ENCODE measurements at regions of chr1 and their contacts with region 1.

Region 1: GRCh38 chr1:3423245-3423829 is 31.1 kb upstream of the ARHGEF16 start:
- DNase-seq: no peak
- ATAC-seq: no peak
- H3K4me3 Mint-ChIP-seq: no peak overlapping the region
- H3K27ac Mint-ChIP-seq: no peak overlapping the region
- H3K4me1 Mint-ChIP-seq: no peaks in the 10 kb centered on the region
- H3K27me3 Mint-ChIP-seq: 0 out of 2 replicates have a peak, but pooled peaks cover 4% of the 10 kb centered on the region
- CTCF ChIP-seq: no peak

Region 2: GRCh38 chr1:3060601-3061551 is 362.5 kb before region 1 on chr1:
- CTCF ChIA-PET with region 1: interaction called, 22 read pairs
- POLR2A ChIA-PET with region 1: no interaction called
- DNase-seq: no peak
- ATAC-seq: no peak
- H3K4me3 Mint-ChIP-seq: no peak overlapping the region
- H3K27ac Mint-ChIP-seq: no peak overlapping the region
- H3K4me1 Mint-ChIP-seq: peaks cover 7% of the 10 kb centered on the region; the same call in 1 of the 2 replicates
- H3K27me3 Mint-ChIP-seq: peaks cover 84% of the 10 kb centered on the region
- CTCF ChIP-seq: no peak

Region 3: GRCh38 chr1:3265835-3266805 is 157.2 kb before region 1 on chr1:
- CTCF ChIA-PET with region 1: interaction called, 10 read pairs
- POLR2A ChIA-PET with region 1: no interaction called
- DNase-seq: no peak
- ATAC-seq: no peak
- H3K4me3 Mint-ChIP-seq: no peak overlapping the region
- H3K27ac Mint-ChIP-seq: no peak overlapping the region
- H3K4me1 Mint-ChIP-seq: no peaks in the 10 kb centered on the region; the same call in 1 of the 2 replicates
- H3K27me3 Mint-ChIP-seq: no peaks in the 10 kb centered on the region
- CTCF ChIP-seq: no peak

Region 4: DNA sequence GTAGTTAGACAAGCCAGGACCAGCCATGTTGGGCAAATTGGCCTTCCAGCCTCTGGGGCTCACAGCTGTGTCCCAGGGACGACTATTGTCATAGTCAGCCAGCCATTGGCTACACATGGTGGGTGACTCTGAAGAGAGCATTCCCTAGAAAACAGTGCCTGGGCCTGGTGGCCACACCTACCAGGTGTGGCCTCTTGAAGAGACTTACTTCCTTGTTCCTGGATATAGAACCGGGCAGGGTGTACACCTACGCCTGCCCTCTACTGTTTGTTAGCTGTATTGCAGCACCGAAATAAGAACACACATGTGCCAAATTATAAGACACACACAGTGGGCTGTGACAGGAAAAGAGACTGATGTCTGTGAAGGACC is 103.5 kb before region 1 on chr1:
- CTCF ChIA-PET with region 1: interaction called, 12 read pairs
- POLR2A ChIA-PET with region 1: interaction called, 3 read pairs
- DNase-seq: peak; percentile 56
- ATAC-seq: peak; percentile 97
- H3K4me3 Mint-ChIP-seq: no peak overlapping the region
- H3K27ac Mint-ChIP-seq: no peak overlapping the region
- H3K4me1 Mint-ChIP-seq: peaks cover 9% of the 10 kb centered on the region
- H3K27me3 Mint-ChIP-seq: peaks cover 9% of the 10 kb centered on the region
- CTCF ChIP-seq: peak; percentile 80

Region 5: DNA sequence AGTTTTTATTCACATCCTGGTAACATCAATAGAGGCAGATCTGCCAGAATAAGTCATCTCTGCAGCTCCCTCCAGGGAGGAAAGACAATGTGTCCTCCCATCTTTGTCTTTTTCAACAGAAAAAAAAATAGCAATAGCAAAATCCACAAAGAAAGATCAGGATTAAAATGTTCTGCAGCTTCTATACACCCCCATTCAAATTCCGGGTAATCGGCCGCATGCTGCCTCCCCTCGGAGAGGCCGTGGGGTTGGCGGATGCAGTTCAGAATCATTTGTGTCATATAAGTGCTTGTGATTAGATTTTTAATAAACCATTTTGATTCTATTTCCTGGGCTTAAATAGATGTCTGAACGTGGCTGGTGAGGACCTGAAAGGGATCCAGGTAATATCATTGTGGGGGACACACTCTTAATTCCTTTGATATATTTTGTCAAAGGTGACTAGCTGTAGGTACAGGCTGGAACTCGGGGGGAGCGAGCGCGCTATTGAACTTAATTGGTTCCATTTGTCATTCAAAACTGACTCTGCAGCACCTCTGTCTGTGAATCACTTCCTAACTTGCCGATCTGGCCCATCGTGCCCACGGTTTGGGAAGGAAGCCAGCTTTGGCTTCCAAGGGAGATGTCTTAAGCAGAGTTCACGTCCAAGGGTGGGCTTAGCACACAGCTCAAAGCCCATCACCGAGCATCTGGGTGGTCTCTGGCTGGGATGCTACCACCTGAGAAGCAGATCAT is 54.5 kb before region 1 on chr1:
- CTCF ChIA-PET with region 1: interaction called, 12 read pairs
- POLR2A ChIA-PET with region 1: no interaction called
- DNase-seq: no peak
- ATAC-seq: peak; percentile 50; the same call in 1 of the 2 replicates
- H3K4me3 Mint-ChIP-seq: 0 out of 2 replicates have a peak overlapping the region, but pooled peaks have one; percentile 20
- H3K27ac Mint-ChIP-seq: 0 out of 2 replicates have a peak overlapping the region, but pooled peaks have one; percentile 52
- H3K4me1 Mint-ChIP-seq: peaks cover 17% of the 10 kb centered on the region
- H3K27me3 Mint-ChIP-seq: no peaks in the 10 kb centered on the region
- CTCF ChIP-seq: no peak

Region 6: DNA sequence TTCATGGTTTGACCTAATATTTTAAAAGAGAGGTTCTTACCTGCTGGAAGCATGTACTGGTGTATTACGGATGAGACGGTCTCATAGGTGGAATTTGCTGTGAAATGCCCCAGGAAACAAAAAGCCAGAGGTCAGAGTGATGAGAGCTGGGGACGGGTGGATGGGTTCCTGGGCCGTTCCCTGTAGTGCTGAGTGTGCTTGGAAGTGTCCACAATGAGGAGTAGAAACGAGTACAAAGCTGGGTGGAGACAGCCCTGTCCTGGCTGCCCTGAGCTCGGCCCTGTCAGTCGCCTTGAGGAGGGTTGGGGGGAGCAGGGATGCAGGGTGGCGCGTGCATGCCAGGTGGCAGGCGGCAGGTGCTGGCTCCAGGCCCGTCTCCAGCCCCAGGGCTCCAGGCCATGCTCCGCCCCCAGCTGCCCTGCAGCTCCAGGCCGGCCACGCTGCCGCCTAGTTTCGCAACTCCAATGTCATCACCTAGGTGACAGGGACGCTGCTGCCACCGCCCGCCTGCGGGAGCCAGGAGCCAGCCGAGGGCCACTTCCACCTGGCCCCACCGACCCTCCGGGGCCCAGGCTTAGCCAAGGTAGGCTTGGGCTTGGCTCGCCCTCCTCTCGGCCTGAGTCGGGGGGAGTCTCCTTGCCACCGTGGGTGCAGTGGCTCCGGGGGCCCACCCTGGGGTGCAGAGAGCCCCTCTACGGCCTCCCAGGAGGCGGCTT is 245.4 kb after region 1 on chr1:
- CTCF ChIA-PET with region 1: no interaction called
- POLR2A ChIA-PET with region 1: no interaction called
- DNase-seq: peak; percentile 75
- ATAC-seq: peak; percentile 83
- H3K4me3 Mint-ChIP-seq: no peak overlapping the region
- H3K27ac Mint-ChIP-seq: no peak overlapping the region
- H3K4me1 Mint-ChIP-seq: peaks cover 26% of the 10 kb centered on the region
- H3K27me3 Mint-ChIP-seq: no peaks in the 10 kb centered on the region; the same call in 1 of the 2 replicates
- CTCF ChIP-seq: no peak